ENCODE measurements at regions of chr5 and their contacts with region 1.

Region 1: GRCh38 chr5:32232441-32233219 is 58.5 kb upstream of the GOLPH3 start:
- DNase-seq: peak; percentile 85
- ATAC-seq: peak; percentile 83

Region 2: GRCh38 chr5:32312647-32313523 is 80.3 kb after region 1 on chr5 and contains the start of gene MTMR12:
- intact Hi-C with region 1: no loop called
- DNase-seq: peak; percentile 100
- ATAC-seq: peak; percentile 99
- total RNA-seq, gene MTMR12: 40.6 TPM

Region 3: DNA sequence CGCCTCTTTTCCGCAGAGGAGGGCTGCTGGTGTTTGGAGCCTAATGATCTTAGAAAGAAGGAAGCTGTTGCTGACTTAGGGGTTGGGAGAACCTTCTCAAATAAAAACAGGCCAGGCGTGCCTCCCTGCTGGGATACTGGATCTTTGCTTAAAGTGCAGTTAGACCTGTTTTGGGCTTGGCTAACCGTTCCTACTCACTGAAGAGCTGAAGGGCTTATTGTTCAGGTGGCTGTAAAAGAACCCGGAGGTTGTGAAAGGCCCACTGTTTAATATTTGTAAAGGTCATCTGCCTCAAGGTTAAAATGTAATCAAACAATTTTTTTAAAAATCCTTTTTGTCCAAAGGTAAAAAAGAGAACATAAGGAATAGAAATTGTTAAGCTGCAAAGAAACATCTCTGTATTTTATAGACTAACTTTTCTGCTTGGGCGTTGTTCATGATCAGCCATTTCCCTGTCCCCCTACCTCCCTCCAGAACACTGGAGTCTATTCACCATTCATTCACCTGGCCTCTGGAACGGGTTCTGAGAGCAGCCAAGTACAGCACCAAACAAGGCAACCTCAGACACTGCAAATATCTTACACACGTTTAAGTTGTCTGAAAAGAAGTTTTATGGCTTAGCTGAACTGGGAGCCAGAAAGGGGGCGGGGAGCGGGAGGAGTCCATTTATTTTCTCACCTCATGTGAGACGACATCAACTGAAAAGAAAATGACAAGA is 98.7 kb after region 1 on chr5:
- intact Hi-C with region 1: loop called (anchors 5 kb)
- DNase-seq: no peak
- ATAC-seq: no peak

Region 4: DNA sequence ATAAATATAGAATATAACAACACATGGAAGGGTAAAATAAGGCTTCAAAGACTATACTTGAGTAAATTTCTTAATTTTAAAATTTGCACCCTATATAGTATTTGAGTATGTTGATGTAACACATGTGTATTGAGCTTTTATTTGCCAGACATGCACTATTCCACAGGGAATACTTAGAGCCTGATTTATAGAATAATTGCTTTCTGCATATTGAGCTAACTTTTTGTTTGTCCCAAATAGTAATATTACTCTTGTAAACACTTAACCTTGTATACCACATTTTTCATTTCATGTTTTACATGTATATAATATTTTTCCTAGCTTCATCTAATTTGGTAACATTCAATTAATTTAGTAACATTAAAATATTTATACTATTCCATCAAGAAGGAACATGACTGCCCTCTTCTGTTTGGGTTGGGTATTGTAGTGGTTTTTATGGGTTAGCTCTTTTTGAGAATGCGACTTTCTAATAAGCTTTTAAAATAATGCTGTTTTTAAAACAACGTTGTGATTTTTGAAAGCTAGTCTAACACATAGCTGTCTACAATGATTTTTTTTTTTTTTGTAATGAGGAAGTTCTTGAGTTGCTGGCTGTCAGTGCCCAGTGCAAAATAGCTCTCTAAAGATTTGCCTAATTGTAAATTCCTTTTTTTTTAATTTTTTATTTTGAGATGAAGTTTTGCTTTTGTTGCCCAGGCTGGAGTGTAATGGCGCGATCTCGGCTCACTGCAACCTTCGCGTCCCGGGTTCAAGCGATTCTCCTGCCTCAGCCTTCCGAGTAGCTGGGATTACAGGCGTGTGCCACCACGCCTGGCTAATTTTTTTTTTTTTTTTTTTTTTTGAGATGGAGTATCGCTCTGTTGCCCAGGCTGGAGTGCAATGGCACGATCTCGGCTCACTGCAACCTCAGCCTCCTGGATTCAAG is 357.6 kb after region 1 on chr5:
- intact Hi-C with region 1: loop called (anchors 10 kb)
- DNase-seq: no peak
- ATAC-seq: no peak